H1 (cell line): ENCODE measurements at regions of chr5 and their contacts with region 1.

Region 1: DNA sequence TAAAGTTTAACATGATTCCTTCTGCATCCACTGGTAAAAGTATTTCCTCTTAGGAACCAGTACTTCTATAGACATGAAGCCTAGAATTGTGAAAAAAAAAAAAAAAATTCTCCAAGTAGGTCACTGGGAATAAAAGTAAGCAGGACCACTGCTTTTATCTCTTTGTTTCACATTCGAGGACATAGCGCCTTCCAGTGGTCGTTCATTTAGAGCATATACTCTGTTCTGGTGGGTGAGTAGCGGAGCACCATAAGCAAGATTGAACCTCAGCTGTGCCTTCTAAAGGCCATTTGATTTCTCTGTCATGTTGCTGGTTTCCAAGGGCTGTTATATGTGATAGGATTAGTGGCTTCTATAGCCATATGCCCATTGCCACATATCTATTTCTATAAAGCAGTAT is 393.1 kb downstream of the TMEM232 start:
- DNase-seq: no peak
- H3K4me3 ChIP-seq: no peak overlapping the region
- H3K27ac ChIP-seq: no peak overlapping the region
- H3K4me1 ChIP-seq: no peaks in the 10 kb centered on the region
- H3K27me3 ChIP-seq: no peaks in the 10 kb centered on the region
- CTCF ChIP-seq: peak in 2 of 3 experiments; percentile 66 to 82; a peak in 3 of 4 replicates
- EP300 ChIP-seq: no peak
- POLR2A ChIP-seq: no peak
- RAD21 ChIP-seq: peak; percentile 88 to 92

Region 2: GRCh38 chr5:110045158-110045557 is 288.2 kb before region 1 on chr5:
- CTCF ChIA-PET with region 1: interaction called, 24 read pairs
- POLR2A ChIA-PET with region 1: no interaction called
- DNase-seq: no peak
- H3K4me3 ChIP-seq: no peak overlapping the region
- H3K27ac ChIP-seq: no peak overlapping the region
- H3K4me1 ChIP-seq: no peaks in the 10 kb centered on the region; a peak in 2 of 7 replicates
- H3K27me3 ChIP-seq: 0 out of 7 replicates have a peak, but pooled peaks cover 0 to 2% (median 0%) of the 10 kb centered on the region in 4 experiments
- CTCF ChIP-seq: peak in 2 of 3 experiments; percentile 24 to 27; a peak in 2 of 4 replicates
- EP300 ChIP-seq: no peak
- POLR2A ChIP-seq: no peak
- RAD21 ChIP-seq: peak; percentile 60 to 64

Region 3: DNA sequence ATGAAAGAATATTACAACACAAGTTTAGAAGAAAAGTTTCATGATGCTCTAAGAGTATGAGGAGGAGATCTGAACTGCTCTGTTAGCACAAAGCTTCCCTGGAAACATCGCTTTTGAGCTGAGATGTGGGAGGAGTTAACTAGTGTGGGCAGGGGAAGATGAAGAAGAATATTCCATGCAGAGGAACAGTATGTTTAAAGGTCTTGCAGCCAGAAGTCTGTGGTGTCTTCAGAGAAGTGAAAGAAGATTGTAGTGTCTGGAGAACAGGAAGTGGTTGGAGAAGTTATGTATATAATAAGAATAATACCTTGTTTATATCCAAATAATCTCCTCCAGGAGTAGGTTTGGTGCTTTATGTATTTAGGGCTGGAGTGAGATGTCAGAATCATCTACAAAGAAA is 237.0 kb before region 1 on chr5:
- CTCF ChIA-PET with region 1: interaction called, 10 read pairs
- POLR2A ChIA-PET with region 1: no interaction called
- DNase-seq: no peak
- H3K4me3 ChIP-seq: no peak overlapping the region
- H3K27ac ChIP-seq: no peak overlapping the region
- H3K4me1 ChIP-seq: no peaks in the 10 kb centered on the region
- H3K27me3 ChIP-seq: no peaks in the 10 kb centered on the region
- CTCF ChIP-seq: no peak
- EP300 ChIP-seq: no peak
- POLR2A ChIP-seq: no peak
- RAD21 ChIP-seq: no peak

Region 4: GRCh38 chr5:110225949-110226348 is 107.4 kb before region 1 on chr5:
- CTCF ChIA-PET with region 1: no interaction called
- POLR2A ChIA-PET with region 1: no interaction called
- DNase-seq: no peak
- H3K4me3 ChIP-seq: no peak overlapping the region
- H3K27ac ChIP-seq: no peak overlapping the region
- H3K4me1 ChIP-seq: no peaks in the 10 kb centered on the region
- H3K27me3 ChIP-seq: no peaks in the 10 kb centered on the region
- CTCF ChIP-seq: no peak
- EP300 ChIP-seq: no peak
- POLR2A ChIP-seq: no peak
- RAD21 ChIP-seq: no peak

Region 5: GRCh38 chr5:110361461-110361860 is 28.1 kb after region 1 on chr5:
- CTCF ChIA-PET with region 1: interaction called, 10 read pairs
- POLR2A ChIA-PET with region 1: no interaction called
- DNase-seq: no peak
- H3K4me3 ChIP-seq: no peak overlapping the region
- H3K27ac ChIP-seq: no peak overlapping the region
- H3K4me1 ChIP-seq: peaks cover 0 to 3% (median 1%) of the 10 kb centered on the region in 4 experiments; a peak in 2 of 7 replicates
- H3K27me3 ChIP-seq: no peaks in the 10 kb centered on the region
- CTCF ChIP-seq: no peak
- EP300 ChIP-seq: no peak
- POLR2A ChIP-seq: no peak
- RAD21 ChIP-seq: no peak

Region 6: DNA sequence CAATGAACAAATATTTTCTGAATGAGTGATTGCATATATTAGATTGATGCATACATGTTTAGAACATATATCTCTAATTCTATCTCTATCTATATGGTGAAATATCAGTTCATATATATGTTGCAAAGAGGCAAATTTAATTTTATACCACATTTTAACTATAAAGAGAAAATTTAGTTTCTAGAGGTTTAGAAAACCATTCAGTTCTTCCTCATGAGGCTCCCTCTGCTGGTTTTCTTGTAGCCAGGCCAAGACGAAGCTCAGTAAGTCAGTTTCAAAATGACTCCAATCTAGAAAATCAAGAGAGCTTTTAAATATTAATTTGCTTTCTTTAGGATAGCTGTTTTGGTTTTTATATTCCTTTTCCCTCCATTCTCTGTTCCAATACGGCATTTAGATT is 81.0 kb after region 1 on chr5:
- CTCF ChIA-PET with region 1: interaction called, 17 read pairs
- POLR2A ChIA-PET with region 1: no interaction called
- DNase-seq: no peak
- H3K4me3 ChIP-seq: no peak overlapping the region
- H3K27ac ChIP-seq: no peak overlapping the region
- H3K4me1 ChIP-seq: no peaks in the 10 kb centered on the region; a peak in 1 of 7 replicates
- H3K27me3 ChIP-seq: no peaks in the 10 kb centered on the region
- CTCF ChIP-seq: peak in 2 of 3 experiments; percentile 23 to 28; a peak in 2 of 4 replicates
- EP300 ChIP-seq: no peak
- POLR2A ChIP-seq: no peak
- RAD21 ChIP-seq: peak; percentile 19 to 47; a peak in 3 of 4 replicates